ENCODE measurements at regions of chr12 and their contacts with region 1.

Region 1: DNA sequence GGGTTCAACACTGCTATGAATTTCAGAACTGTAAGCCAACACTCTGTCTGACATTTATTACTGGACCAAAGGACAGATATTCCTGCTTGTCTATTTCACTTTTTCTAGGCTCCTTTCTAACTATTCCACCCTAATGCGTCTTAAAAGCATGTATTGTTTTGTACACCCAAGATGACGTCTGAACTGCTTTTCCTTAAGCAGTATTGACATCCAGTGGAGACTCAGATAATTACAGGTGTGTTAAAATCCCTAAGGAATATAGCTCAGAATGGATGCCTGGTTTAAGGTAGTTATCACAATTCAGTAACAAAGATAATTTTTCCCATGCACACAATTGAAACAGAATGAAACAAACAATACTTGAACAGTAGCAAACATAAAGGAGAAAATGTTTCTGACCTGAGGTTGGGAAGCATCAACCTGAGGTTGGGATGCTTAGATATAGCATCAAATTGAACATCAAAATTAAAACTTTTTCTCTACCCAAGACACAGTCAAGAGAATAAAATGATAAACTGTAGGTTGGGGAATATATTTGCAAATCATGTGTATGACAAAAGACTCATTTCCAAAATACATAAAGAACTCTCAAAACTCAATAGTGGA is 93.7 kb upstream of the PTPRR start:
- DNase-seq: peak; percentile 24
- H3K4me3 Mint-ChIP-seq: peak overlapping the region; percentile 44
- H3K27ac Mint-ChIP-seq: peak overlapping the region; percentile 50
- H3K4me1 Mint-ChIP-seq: peaks cover 36% of the 10 kb centered on the region
- H3K27me3 Mint-ChIP-seq: no peaks in the 10 kb centered on the region
- CTCF ChIP-seq: peak; percentile 69

Region 2: DNA sequence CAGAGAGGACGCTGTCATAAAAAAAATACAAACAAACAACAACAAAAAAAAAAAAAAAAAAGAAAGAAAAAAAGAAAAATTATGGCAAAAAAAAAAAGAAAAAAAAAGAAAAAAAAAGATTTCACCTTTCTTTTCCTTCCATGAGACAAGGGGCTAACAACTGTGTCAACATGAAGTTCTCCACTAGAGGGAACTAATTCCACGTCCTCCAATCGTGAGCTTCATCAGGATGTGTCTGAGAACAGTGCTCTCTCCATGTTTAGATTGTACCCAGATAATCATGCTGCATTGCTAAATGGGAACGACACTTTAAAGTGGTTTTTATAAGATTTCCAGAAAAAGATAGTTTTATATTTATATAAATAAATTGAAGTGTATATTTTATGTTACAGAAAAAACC is 280.9 kb before region 1 on chr12:
- CTCF ChIA-PET with region 1: interaction called, 17 read pairs
- intact Hi-C with region 1: loop called (anchors 2 kb)
- DNase-seq: peak; percentile 48
- H3K4me3 Mint-ChIP-seq: no peak overlapping the region
- H3K27ac Mint-ChIP-seq: no peak overlapping the region
- H3K4me1 Mint-ChIP-seq: peaks cover 10% of the 10 kb centered on the region
- H3K27me3 Mint-ChIP-seq: no peaks in the 10 kb centered on the region
- CTCF ChIP-seq: peak; percentile 57

Region 3: DNA sequence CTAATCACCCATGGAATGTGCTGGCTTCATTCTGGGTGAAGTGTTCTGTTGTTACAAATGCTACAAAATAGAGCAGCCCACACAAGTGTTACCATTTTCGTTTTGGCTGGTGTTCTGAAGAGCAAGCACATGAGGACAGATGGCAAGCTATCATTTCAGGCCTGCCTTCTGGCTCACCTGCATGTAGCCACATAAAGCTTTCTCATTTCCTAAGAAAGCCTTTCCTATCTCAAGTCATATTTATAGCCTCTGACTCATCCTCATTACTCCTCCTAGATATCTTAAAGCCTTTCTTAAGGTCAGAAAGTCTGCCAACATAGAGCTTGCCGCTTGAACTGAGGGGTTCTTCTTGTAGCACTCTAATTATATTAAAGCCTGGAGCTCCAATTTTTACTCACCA is 182.7 kb before region 1 on chr12:
- CTCF ChIA-PET with region 1: interaction called, 5 read pairs
- intact Hi-C with region 1: loop called (anchors 5 kb)
- DNase-seq: no peak
- H3K4me3 Mint-ChIP-seq: no peak overlapping the region
- H3K27ac Mint-ChIP-seq: no peak overlapping the region
- H3K4me1 Mint-ChIP-seq: peaks cover 19% of the 10 kb centered on the region
- H3K27me3 Mint-ChIP-seq: no peaks in the 10 kb centered on the region
- CTCF ChIP-seq: no peak

Region 4: GRCh38 chr12:70936203-70936813 is 78.0 kb before region 1 on chr12:
- CTCF ChIA-PET with region 1: no interaction called
- intact Hi-C with region 1: no loop called
- DNase-seq: no peak
- H3K4me3 Mint-ChIP-seq: no peak overlapping the region
- H3K27ac Mint-ChIP-seq: no peak overlapping the region
- H3K4me1 Mint-ChIP-seq: no peaks in the 10 kb centered on the region
- H3K27me3 Mint-ChIP-seq: peaks cover 35% of the 10 kb centered on the region
- CTCF ChIP-seq: no peak

Region 5: DNA sequence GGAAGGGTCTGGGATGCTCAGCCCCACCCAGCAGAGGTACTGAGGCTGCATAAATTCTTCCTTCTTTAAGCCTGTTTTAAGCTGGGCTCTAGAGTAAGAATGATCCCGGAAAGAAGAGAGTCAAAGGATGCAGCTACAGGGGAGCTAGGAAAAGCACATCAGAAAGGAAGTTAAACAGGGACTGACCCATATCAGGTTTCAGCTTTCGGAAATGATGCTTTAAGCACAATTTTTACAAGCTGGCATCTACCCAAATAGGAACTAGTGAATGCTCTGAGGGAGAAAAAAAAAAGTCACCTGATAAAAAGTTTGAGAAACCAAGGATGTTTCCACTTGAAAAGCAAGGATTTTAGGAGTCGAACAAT is 121.5 kb after region 1 on chr12:
- CTCF ChIA-PET with region 1: interaction called, 3 read pairs
- intact Hi-C with region 1: loop called (anchors 10 kb)
- DNase-seq: no peak
- H3K4me3 Mint-ChIP-seq: no peak overlapping the region
- H3K27ac Mint-ChIP-seq: peak overlapping the region; percentile 68
- H3K4me1 Mint-ChIP-seq: peaks cover 72% of the 10 kb centered on the region
- H3K27me3 Mint-ChIP-seq: no peaks in the 10 kb centered on the region
- CTCF ChIP-seq: no peak

Measured in Calu3 (cell line).